ENCODE measurements at regions of chr13 and their contacts with region 1.

Region 1: GRCh38 chr13:50222569-50223332 is 207.5 kb downstream of the KCNRG start:
- DNase-seq: no peak
- ATAC-seq: peak; percentile 88
- H3K4me3 ChIP-seq: peak overlapping the region in 1 of 2 experiments; percentile 40; a peak in 2 of 4 replicates
- H3K27ac ChIP-seq: peak overlapping the region; percentile 91
- H3K4me1 ChIP-seq: peaks cover 17% of the 10 kb centered on the region
- H3K27me3 ChIP-seq: no peaks in the 10 kb centered on the region
- CTCF ChIP-seq: no peak

Region 2: DNA sequence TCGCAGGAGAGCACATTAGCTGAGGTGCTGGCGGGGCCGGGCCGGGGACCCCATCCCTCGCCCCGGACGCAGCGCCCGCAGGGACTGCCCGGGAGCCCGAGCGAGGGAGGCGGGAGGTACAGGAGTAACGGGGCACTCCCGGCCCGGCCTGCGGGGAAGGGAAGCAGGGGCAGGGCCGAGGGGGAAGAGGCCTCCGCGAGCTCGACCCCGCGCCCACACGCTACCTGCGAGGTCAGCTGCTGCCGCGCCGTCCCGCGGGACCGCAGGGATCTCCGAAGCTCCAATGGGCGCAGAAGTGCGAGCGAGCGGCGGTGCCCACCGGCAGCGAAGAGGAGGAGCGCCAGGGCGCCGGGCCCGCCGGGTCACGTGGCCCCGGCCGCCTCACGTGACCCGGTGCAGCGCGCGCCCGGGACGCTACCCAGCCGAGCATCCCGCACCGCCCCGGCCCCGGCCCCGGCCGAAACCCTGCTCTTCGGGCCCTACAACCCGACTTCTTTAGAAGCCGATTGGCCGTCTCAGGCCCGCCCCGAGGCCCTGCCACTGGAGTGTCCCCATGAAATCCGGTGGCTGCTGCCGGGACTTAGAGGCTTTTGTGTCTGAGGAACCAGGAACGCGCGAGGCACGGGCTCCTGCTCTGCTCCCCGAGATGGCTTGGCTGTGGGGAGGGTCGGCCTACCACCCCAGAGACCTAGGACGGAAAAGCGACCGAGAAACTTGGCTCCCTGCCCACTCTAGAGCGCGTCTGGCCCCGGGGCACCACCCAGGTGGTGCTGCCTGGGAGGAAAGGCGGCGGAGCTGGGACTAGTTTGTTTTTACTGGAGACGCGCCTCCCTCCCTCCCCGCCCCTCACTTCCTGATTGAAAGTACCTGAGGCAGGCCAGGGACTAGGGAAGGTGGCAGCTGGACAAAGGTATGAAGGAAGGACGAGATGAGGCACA is 637.3 kb before region 1 on chr13 and contains the start of gene RCBTB1:
- CTCF ChIA-PET with region 1: no interaction called
- POLR2A ChIA-PET with region 1: no interaction called
- in situ Hi-C with region 1: no loop called
- intact Hi-C with region 1: no loop called
- DNase-seq: no peak
- ATAC-seq: peak; percentile 98
- H3K4me3 ChIP-seq: peak within 1 kb of the TSS; percentile 75 to 87
- H3K27ac ChIP-seq: peak within 1 kb of the TSS; percentile 79
- H3K4me1 ChIP-seq: peaks cover 7% of the 10 kb centered on the region; the same call in 1 of the 2 replicates
- H3K27me3 ChIP-seq: no peaks in the 10 kb centered on the region
- CTCF ChIP-seq: no peak
- total RNA-seq, gene RCBTB1: 14.8 TPM

Region 3: GRCh38 chr13:50123862-50124536 is 98.8 kb before region 1 on chr13:
- CTCF ChIA-PET with region 1: no interaction called
- POLR2A ChIA-PET with region 1: no interaction called
- in situ Hi-C with region 1: no loop called
- intact Hi-C with region 1: no loop called
- DNase-seq: no peak
- ATAC-seq: peak; percentile 90
- H3K4me3 ChIP-seq: peak overlapping the region; percentile 74 to 81
- H3K27ac ChIP-seq: peak overlapping the region; percentile 97
- H3K4me1 ChIP-seq: peaks cover 33% of the 10 kb centered on the region
- H3K27me3 ChIP-seq: no peaks in the 10 kb centered on the region
- CTCF ChIP-seq: no peak; the same call in 1 of the 2 replicates

Region 4: GRCh38 chr13:50149932-50150331 is 72.8 kb before region 1 on chr13:
- CTCF ChIA-PET with region 1: no interaction called
- POLR2A ChIA-PET with region 1: no interaction called
- in situ Hi-C with region 1: no loop called
- intact Hi-C with region 1: loop called (anchors 10 kb)
- DNase-seq: no peak
- ATAC-seq: no peak
- H3K4me3 ChIP-seq: no peak overlapping the region
- H3K27ac ChIP-seq: peak overlapping the region; percentile 8
- H3K4me1 ChIP-seq: peaks cover 25% of the 10 kb centered on the region
- H3K27me3 ChIP-seq: no peaks in the 10 kb centered on the region
- CTCF ChIP-seq: no peak

Measured in Panc1 (cell line).